CD4-positive, alpha-beta T cell (primary cell): ENCODE measurements at regions of chr10 and their contacts with region 1.

Region 1: DNA sequence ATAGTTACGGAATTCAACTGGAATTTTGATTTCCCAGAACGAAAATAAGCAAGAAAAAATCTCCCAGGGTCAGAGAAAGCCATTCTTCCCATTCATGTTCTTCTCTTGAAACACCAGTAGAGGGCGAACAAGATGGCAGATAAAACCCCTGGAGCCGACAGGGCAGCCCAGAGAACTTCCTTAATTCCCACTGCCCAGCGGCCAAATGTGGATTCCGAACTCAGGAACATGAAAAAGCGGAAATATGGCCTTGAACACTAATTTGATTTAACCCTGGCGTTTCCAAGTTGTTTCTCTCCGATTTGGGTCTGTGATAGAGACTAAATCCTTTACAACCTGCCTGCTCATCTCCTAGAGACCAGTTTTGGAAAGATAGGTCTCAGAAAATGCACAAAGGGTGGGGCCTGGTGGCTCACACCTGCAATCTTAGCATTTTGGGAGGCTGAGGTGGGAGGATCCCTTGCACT is 100.7 kb upstream of the WAC start:
- DNase-seq: peak in 8 of 14 experiments; percentile 2 to 72 (median 16)
- ATAC-seq: peak; percentile 65
- H3K4me3 ChIP-seq: peak overlapping the region; percentile 15
- H3K4me3 Mint-ChIP-seq: peak overlapping the region; percentile 44
- H3K27ac ChIP-seq: no peak overlapping the region
- H3K27ac Mint-ChIP-seq: no peak overlapping the region
- H3K4me1 ChIP-seq: peaks cover 5% of the 10 kb centered on the region
- H3K4me1 Mint-ChIP-seq: peaks cover 8% of the 10 kb centered on the region
- H3K27me3 ChIP-seq: no peaks in the 10 kb centered on the region
- H3K27me3 Mint-ChIP-seq: peaks cover 4% of the 10 kb centered on the region
- CTCF ChIP-seq: peak; percentile 85

Region 2: DNA sequence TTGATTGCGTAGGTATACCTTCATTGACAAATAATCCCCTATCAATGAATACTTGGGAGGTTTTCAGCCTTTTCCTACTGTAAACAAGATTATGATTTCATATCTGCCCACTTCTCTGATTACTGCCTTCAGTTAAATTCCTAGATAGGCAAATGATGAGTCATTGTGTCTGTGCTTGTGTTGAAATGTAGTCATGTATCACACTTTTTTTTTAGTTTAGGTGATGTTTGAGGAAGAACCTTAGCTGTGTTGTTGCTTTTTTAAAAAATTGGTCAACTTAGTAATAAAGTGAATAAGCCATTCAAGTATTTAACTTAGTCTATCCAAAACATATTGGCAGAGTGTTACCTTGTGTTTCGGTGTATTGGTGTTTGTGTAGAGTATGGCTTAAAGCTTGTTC is 160.7 kb after region 1 on chr10:
- CTCF ChIA-PET with region 1: no interaction called
- POLR2A ChIA-PET with region 1: no interaction called
- intact Hi-C with region 1: loop called in 1 of 2 experiments (anchors 10 kb)
- DNase-seq: peak in 2 of 14 experiments; percentile 24 to 30
- ATAC-seq: no peak
- H3K4me3 ChIP-seq: no peak overlapping the region
- H3K4me3 Mint-ChIP-seq: peak overlapping the region; percentile 3
- H3K27ac ChIP-seq: no peak overlapping the region
- H3K27ac Mint-ChIP-seq: peak overlapping the region; percentile 12
- H3K4me1 ChIP-seq: peaks cover 13% of the 10 kb centered on the region
- H3K4me1 Mint-ChIP-seq: peaks cover 69% of the 10 kb centered on the region
- H3K27me3 ChIP-seq: no peaks in the 10 kb centered on the region
- H3K27me3 Mint-ChIP-seq: no peaks in the 10 kb centered on the region
- CTCF ChIP-seq: no peak

Region 3: GRCh38 chr10:28619455-28619854 is 187.2 kb after region 1 on chr10:
- CTCF ChIA-PET with region 1: no interaction called
- POLR2A ChIA-PET with region 1: no interaction called
- intact Hi-C with region 1: loop called in 1 of 2 experiments (anchors 5 kb)
- DNase-seq: no peak
- ATAC-seq: no peak
- H3K4me3 ChIP-seq: no peak overlapping the region
- H3K4me3 Mint-ChIP-seq: no peak overlapping the region
- H3K27ac ChIP-seq: no peak overlapping the region
- H3K27ac Mint-ChIP-seq: no peak overlapping the region
- H3K4me1 ChIP-seq: no peaks in the 10 kb centered on the region
- H3K4me1 Mint-ChIP-seq: no peaks in the 10 kb centered on the region
- H3K27me3 ChIP-seq: no peaks in the 10 kb centered on the region
- H3K27me3 Mint-ChIP-seq: no peaks in the 10 kb centered on the region
- CTCF ChIP-seq: no peak

Region 4: GRCh38 chr10:29304264-29305030 is 872.2 kb after region 1 on chr10:
- CTCF ChIA-PET with region 1: no interaction called
- POLR2A ChIA-PET with region 1: no interaction called
- intact Hi-C with region 1: loop called in 1 of 2 experiments (anchors 10 kb)
- DNase-seq: peak in 7 of 14 experiments; percentile 1 to 50 (median 20)
- ATAC-seq: no peak
- H3K4me3 ChIP-seq: no peak overlapping the region
- H3K4me3 Mint-ChIP-seq: no peak overlapping the region
- H3K27ac ChIP-seq: no peak overlapping the region
- H3K27ac Mint-ChIP-seq: no peak overlapping the region
- H3K4me1 ChIP-seq: no peaks in the 10 kb centered on the region
- H3K4me1 Mint-ChIP-seq: no peaks in the 10 kb centered on the region
- H3K27me3 ChIP-seq: peaks cover 0 to 10% of the 10 kb centered on the region in 2 experiments
- H3K27me3 Mint-ChIP-seq: peaks cover 41% of the 10 kb centered on the region
- CTCF ChIP-seq: peak; percentile 53